ENCODE measurements at regions of chr7 and their contacts with region 1.

Region 1: DNA sequence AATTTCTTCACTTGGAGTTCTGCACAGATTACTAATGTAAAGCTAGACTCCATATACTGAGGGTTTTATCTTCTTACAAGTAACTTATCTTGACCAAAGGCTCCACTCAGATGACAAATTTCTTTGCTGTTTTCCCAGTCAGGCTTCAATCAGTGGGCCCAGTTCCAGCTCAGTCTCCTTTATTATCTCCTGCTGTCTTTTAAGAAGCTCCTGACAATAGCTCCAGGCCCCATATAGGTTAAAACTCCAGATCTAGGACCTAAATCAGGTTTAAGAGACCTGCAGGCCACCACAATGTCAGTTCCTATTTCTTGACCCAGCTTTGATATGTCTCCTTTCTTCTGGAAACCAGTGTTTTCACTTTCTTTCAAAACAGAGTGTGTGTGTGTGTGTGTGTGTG is 165.2 kb downstream of the RELN start:
- DNase-seq: no peak
- ATAC-seq: no peak
- H3K4me3 ChIP-seq: no peak overlapping the region
- H3K27ac ChIP-seq: no peak overlapping the region
- H3K4me1 ChIP-seq: no peaks in the 10 kb centered on the region
- H3K27me3 ChIP-seq: no peaks in the 10 kb centered on the region
- CTCF ChIP-seq: no peak
- EP300 ChIP-seq: no peak
- POLR2A ChIP-seq: no peak
- RAD21 ChIP-seq: no peak

Region 2: GRCh38 chr7:103797647-103798307 is 26.5 kb before region 1 on chr7:
- CTCF ChIA-PET with region 1: no interaction called
- POLR2A ChIA-PET with region 1: no interaction called
- in situ Hi-C with region 1: no loop called
- intact Hi-C with region 1: loop called (anchors 1 kb)
- DNase-seq: no peak
- ATAC-seq: no peak
- H3K4me3 ChIP-seq: no peak overlapping the region
- H3K27ac ChIP-seq: no peak overlapping the region
- H3K4me1 ChIP-seq: peaks cover 35% of the 10 kb centered on the region
- H3K27me3 ChIP-seq: no peaks in the 10 kb centered on the region
- CTCF ChIP-seq: no peak
- EP300 ChIP-seq: no peak
- POLR2A ChIP-seq: no peak
- RAD21 ChIP-seq: no peak